ENCODE measurements at regions of chr18 and their contacts with region 1.

Region 1: DNA sequence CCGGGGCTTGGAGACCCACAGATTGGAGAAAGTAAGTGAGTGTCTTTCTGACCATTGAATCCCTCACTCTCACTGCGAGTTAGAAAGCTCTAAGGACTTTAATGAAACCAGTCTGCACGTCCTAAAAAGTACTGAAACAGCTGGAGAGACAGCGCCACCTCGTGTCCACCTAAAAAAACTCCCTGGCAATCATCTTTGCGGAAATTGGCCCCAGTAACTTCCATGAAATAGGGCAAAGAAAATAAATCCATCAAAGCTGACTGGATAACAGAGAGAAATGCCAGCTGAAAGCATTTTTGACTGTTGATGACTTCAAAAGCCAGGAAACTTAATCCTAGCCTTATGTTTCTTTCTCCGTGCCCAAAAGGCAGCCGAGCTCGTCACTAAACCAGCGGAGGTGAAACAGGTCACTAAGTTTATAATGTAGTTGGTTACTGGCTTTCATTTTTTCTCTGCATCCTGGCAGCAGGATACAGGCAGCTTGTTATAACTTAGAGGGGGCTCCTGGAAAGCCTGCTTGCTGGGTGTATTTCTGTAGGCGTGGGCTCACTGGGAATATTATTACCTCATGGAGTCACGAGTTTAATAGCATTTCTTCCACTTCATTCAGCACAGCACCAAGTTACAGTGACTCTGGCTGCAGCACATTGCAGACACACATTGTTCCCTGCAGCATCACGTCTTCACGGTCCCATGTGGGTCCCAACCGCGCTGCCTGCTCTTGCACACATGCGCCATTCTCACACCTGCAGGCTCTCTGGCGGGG is 266.5 kb downstream of the HRH4 start:
- DNase-seq: peak; percentile 61 to 72
- ATAC-seq: peak; percentile 43 to 86 (median 74)
- H3K4me3 ChIP-seq: peak overlapping the region in 6 of 10 donors; percentile 10 to 43 (median 34)
- H3K27ac ChIP-seq: peak overlapping the region in 1 of 10 donors; percentile 6
- H3K4me1 ChIP-seq: peaks cover 0 to 16% (median 2%) of the 10 kb centered on the region in 9 donors
- H3K27me3 ChIP-seq: peaks cover 0 to 10% (median 0%) of the 10 kb centered on the region in 7 donors
- CTCF ChIP-seq: peak; percentile 75 to 89 (median 85)

Region 2: GRCh38 chr18:24354286-24354685 is 372.6 kb before region 1 on chr18:
- intact Hi-C with region 1: loop called in 1 of 10 experiments (anchors 10 kb)
- DNase-seq: no peak
- ATAC-seq: no peak
- H3K4me3 ChIP-seq: no peak overlapping the region
- H3K27ac ChIP-seq: no peak overlapping the region
- H3K4me1 ChIP-seq: no peaks in the 10 kb centered on the region
- H3K27me3 ChIP-seq: no peaks in the 10 kb centered on the region
- CTCF ChIP-seq: no peak

Region 3: DNA sequence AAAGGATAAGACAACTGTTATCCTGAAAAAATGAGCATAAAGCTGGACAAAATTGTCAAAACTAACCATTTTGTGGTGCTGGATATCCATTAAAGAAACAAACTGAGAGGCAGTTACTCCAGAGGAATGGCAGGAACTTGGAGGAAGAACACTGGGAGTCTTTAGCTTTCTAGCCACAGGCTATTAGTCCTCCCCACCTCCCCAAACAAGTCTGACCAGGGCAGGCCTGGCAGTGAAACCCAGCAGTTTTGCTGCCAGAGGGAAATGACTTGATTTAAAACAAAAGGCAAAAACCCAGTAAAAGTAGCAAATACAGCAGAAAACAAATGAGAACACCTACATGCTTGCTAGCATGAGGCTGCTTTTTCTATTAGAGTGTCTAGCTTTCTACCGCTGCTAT is 364.2 kb before region 1 on chr18:
- intact Hi-C with region 1: loop called in 2 of 10 experiments (anchors 5 to 10 kb)
- DNase-seq: no peak
- ATAC-seq: no peak
- H3K4me3 ChIP-seq: no peak overlapping the region
- H3K27ac ChIP-seq: no peak overlapping the region
- H3K4me1 ChIP-seq: peaks cover 0 to 5% (median 0%) of the 10 kb centered on the region in 9 donors
- H3K27me3 ChIP-seq: no peaks in the 10 kb centered on the region
- CTCF ChIP-seq: no peak

Region 4: GRCh38 chr18:24488824-24489493 is 238.0 kb before region 1 on chr18:
- intact Hi-C with region 1: loop called in 8 of 10 experiments (anchors 2 to 10 kb)
- DNase-seq: no peak
- ATAC-seq: peak in 3 of 8 donors; percentile 42 to 65 (median 53)
- H3K4me3 ChIP-seq: no peak overlapping the region
- H3K27ac ChIP-seq: no peak overlapping the region
- H3K4me1 ChIP-seq: peaks cover 0 to 8% (median 0%) of the 10 kb centered on the region in 9 donors
- H3K27me3 ChIP-seq: no peaks in the 10 kb centered on the region
- CTCF ChIP-seq: peak; percentile 62 to 89 (median 82)

Region 5: DNA sequence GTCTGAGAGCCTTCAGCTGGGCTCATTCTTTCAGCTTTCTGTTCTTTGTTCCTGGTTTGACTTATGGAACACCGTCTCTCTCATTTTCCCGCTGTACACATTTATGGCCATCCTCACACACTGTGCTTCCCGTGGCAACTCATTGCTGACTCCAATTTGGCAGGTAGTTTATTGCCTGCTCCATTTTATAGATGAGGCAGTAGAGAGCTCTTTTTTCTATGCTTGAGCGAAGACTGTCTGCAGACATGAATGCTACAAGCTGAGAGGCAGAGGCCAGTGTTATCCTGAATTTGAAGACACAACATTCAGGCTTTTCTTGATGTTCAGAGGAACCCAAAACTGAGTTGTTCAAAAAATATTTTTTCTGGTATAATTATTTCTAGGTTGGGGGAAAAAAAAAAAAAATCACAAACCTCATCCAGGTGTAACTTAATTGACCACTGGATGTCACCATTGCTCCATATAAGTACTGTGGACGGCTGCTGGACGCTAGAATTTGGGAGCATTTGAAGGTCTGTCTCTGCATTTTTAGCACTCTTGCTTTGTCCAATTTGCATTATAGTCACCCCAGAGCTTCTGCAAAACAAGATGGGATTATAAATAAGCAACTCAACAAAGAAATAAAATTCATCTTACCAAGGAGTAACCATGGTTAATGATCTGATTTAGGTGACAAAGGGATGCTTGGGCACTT is 183.0 kb before region 1 on chr18:
- intact Hi-C with region 1: loop called in 2 of 10 experiments (anchors 5 kb)
- DNase-seq: peak in 1 of 2 donors; percentile 7
- ATAC-seq: no peak
- H3K4me3 ChIP-seq: no peak overlapping the region
- H3K27ac ChIP-seq: no peak overlapping the region
- H3K4me1 ChIP-seq: no peaks in the 10 kb centered on the region
- H3K27me3 ChIP-seq: peaks cover 0 to 9% (median 0%) of the 10 kb centered on the region in 7 donors
- CTCF ChIP-seq: peak in 7 of 9 donors; percentile 16 to 56 (median 42)

Region 6: GRCh38 chr18:24600076-24600654 is 126.7 kb before region 1 on chr18:
- intact Hi-C with region 1: loop called (anchors 1 to 5 kb)
- DNase-seq: peak in 1 of 2 donors; percentile 45
- ATAC-seq: peak in 3 of 8 donors; percentile 35 to 57 (median 42)
- H3K4me3 ChIP-seq: no peak overlapping the region
- H3K27ac ChIP-seq: no peak overlapping the region
- H3K4me1 ChIP-seq: no peaks in the 10 kb centered on the region
- H3K27me3 ChIP-seq: peaks cover 0 to 18% (median 9%) of the 10 kb centered on the region in 7 donors
- CTCF ChIP-seq: peak; percentile 36 to 81 (median 74)

Region 7: DNA sequence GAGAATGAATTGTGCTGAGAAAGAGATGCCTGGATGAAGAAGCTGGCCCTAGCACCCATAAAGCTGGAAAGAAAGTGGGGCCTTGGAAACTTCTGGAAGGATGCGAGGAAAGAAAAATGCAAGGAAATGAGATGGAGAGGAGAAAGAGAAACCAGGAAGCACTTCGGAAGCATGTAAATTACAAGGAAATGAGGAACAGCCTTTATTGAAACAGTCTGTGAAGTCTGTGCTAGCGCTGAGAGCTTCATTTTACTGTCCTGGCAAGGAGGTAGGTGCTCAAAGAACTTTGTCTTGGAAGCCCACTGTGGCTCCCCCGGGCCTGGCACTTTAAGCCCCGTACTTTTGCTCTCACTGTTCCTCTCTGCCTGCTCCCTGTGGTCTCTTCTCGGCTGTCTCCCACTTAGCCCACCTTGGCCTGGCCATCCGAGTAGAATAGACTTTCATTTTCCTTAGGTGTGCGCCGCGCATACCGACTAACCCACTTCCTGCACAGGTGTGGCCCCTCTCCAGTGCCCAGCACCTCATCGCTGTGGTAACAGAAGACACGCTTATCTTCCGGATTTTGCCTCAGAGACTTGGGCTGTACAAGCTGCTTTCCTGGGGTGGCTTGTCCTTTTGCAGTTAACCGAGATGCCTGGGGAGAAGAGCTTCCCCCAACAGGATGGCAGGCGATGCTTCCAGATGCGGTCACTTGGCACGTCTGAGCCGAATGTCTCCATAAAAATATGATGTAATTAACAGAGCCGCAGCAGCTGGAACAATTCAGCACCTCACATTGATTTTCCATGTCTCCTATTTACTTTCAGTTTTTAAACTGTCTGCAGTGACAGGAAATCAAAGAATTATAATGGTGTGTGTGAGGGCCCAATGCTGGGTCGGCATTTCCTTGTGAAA is 66.8 kb before region 1 on chr18:
- intact Hi-C with region 1: loop called in 1 of 10 experiments (anchors 10 kb)
- DNase-seq: peak; percentile 35 to 50
- ATAC-seq: peak in 7 of 8 donors; percentile 51 to 74 (median 60)
- H3K4me3 ChIP-seq: peak overlapping the region; percentile 26 to 58 (median 50)
- H3K27ac ChIP-seq: peak overlapping the region; percentile 27 to 93 (median 79)
- H3K4me1 ChIP-seq: peaks cover 0 to 47% (median 22%) of the 10 kb centered on the region in 9 donors
- H3K27me3 ChIP-seq: peaks cover 0 to 3% (median 0%) of the 10 kb centered on the region in 7 donors
- CTCF ChIP-seq: no peak